ENCODE measurements at regions of chr3 and their contacts with region 1.

Region 1: GRCh38 chr3:182920515-182921084 is 59.7 kb downstream of the DCUN1D1 start:
- DNase-seq: peak; percentile 70 to 96 (median 78)
- ATAC-seq: peak; percentile 97
- H3K4me3 ChIP-seq: peak overlapping the region; percentile 11; the same call in 1 of the 2 replicates
- H3K27ac ChIP-seq: peak overlapping the region; percentile 97
- H3K4me1 ChIP-seq: peaks cover 0 to 46% of the 10 kb centered on the region in 2 experiments; a peak in 4 of 5 replicates
- H3K27me3 ChIP-seq: no peaks in the 10 kb centered on the region
- CTCF ChIP-seq: no peak
- EP300 ChIP-seq: peak; percentile 93; the same call in 1 of the 2 replicates
- POLR2A ChIP-seq: peak; percentile 64
- RAD21 ChIP-seq: peak in 1 of 2 experiments; percentile 10; a peak in 1 of 4 replicates

Region 2: GRCh38 chr3:182490596-182491491 is 429.8 kb before region 1 on chr3:
- CTCF ChIA-PET with region 1: no interaction called
- POLR2A ChIA-PET with region 1: no interaction called
- in situ Hi-C with region 1: no loop called
- intact Hi-C with region 1: no loop called
- DNase-seq: peak in 3 of 4 experiments; percentile 11 to 47 (median 20)
- ATAC-seq: peak; percentile 77
- H3K4me3 ChIP-seq: no peak overlapping the region
- H3K27ac ChIP-seq: no peak overlapping the region
- H3K4me1 ChIP-seq: no peaks in the 10 kb centered on the region
- H3K27me3 ChIP-seq: no peaks in the 10 kb centered on the region
- CTCF ChIP-seq: peak; percentile 39 to 54 (median 45); a peak in 4 of 6 replicates
- EP300 ChIP-seq: no peak
- POLR2A ChIP-seq: no peak
- RAD21 ChIP-seq: peak; percentile 66 to 77

Region 3: DNA sequence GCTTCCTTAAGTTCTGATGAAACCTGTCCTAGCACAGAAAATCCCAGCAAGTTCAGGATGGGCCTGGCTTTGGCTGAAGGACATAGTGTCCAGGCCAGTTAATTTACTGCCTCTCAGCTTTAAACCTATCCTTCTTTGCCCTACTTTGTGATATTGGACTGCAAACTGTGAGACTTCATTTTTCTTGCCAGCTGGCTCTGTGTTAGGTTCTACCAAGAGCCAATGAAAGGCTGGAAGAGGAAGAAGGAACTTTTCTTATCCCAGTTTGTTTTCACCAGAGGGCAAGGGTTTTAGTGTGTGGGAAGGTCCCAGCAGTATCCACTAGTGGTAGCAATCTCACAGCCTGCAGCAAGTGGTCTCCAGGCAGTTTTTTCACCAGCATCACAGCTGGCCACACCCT is 41.6 kb after region 1 on chr3:
- CTCF ChIA-PET with region 1: no interaction called
- POLR2A ChIA-PET with region 1: interaction called, 11 read pairs
- in situ Hi-C with region 1: no loop called
- intact Hi-C with region 1: no loop called
- DNase-seq: no peak
- ATAC-seq: peak; percentile 71
- H3K4me3 ChIP-seq: no peak overlapping the region
- H3K27ac ChIP-seq: peak overlapping the region; percentile 19; the same call in 1 of the 3 replicates
- H3K4me1 ChIP-seq: peaks cover 6 to 12% of the 10 kb centered on the region in 2 experiments; a peak in 3 of 5 replicates
- H3K27me3 ChIP-seq: no peaks in the 10 kb centered on the region
- CTCF ChIP-seq: no peak
- EP300 ChIP-seq: no peak
- POLR2A ChIP-seq: no peak
- RAD21 ChIP-seq: no peak

Region 4: DNA sequence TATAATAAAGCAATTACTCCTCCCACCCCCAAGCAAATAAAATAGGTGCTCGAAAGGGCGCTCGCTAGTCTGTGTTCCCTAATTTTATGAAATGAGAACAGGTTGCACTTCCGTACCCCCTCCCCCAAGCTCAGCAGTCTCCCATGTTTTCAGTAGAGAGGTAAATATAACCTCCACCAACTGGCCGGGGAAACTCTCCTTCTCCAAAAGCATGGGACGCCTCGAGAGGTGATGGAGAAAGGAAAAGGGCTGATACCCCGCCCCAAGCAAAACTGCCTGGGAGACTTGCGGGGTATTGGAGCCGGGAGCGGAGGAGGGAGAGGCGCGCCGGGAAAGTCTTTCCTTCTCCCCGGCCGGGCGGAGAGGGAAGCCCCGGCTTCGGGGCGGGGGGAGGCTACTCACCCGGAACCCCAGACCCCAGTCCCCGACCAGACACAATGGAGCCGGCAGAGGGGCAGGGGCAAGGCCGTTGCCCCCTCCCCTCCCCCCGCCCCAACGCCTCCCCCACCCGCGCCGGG is 59.1 kb after region 1 on chr3:
- CTCF ChIA-PET with region 1: no interaction called
- POLR2A ChIA-PET with region 1: interaction called, 5 read pairs
- in situ Hi-C with region 1: no loop called
- intact Hi-C with region 1: loop called (anchors 2 kb)
- DNase-seq: peak; percentile 24 to 50 (median 30)
- ATAC-seq: peak; percentile 15
- H3K4me3 ChIP-seq: peak overlapping the region; percentile 74
- H3K27ac ChIP-seq: peak overlapping the region; percentile 72
- H3K4me1 ChIP-seq: peaks cover 22 to 36% of the 10 kb centered on the region in 2 experiments
- H3K27me3 ChIP-seq: no peaks in the 10 kb centered on the region
- CTCF ChIP-seq: no peak
- EP300 ChIP-seq: no peak
- POLR2A ChIP-seq: no peak
- RAD21 ChIP-seq: no peak

Region 5: GRCh38 chr3:183099026-183099837 is 178.6 kb after region 1 on chr3 and contains the start of gene MCCC1:
- CTCF ChIA-PET with region 1: no interaction called
- POLR2A ChIA-PET with region 1: no interaction called
- in situ Hi-C with region 1: no loop called
- intact Hi-C with region 1: loop called (anchors 5 kb)
- DNase-seq: peak; percentile 98 to 99 (median 98)
- ATAC-seq: peak; percentile 100
- H3K4me3 ChIP-seq: peak within 1 kb of the TSS; percentile 83
- H3K27ac ChIP-seq: peak within 1 kb of the TSS; percentile 75
- H3K4me1 ChIP-seq: peaks cover 5 to 13% of the 10 kb centered on the region in 2 experiments; a peak in 4 of 5 replicates
- H3K27me3 ChIP-seq: no peaks in the 10 kb centered on the region
- CTCF ChIP-seq: no peak
- EP300 ChIP-seq: peak; percentile 30; the same call in 1 of the 2 replicates
- POLR2A ChIP-seq: peak; percentile 89
- RAD21 ChIP-seq: 0 out of 4 replicates have a peak, but pooled peaks of 1 of the 2 experiments have one; percentile 4
- polyA plus RNA-seq, gene MCCC1: 13.7 to 14.3 TPM

Measured in K562 (cell line).